Kidney (tissue), 22 donors: ENCODE measurements at regions of chr11 and their contacts with region 1.

Region 1: GRCh38 chr11:304915-305843 is 2.4 kb upstream of the IFITM2 start:
- DNase-seq: peak in 3 of 5 donors; percentile 74 to 91 (median 88)
- H3K4me3 ChIP-seq: no peak overlapping the region
- H3K27ac ChIP-seq: no peak overlapping the region
- H3K4me1 ChIP-seq: peaks cover 0 to 12% (median 0%) of the 10 kb centered on the region in 3 donors
- H3K27me3 ChIP-seq: no peaks in the 10 kb centered on the region
- CTCF ChIP-seq: peak; percentile 72

Region 2: GRCh38 chr11:355581-356458 is 50.6 kb after region 1 on chr11:
- intact Hi-C with region 1: loop called (anchors 10 kb)
- DNase-seq: peak; percentile 95 to 99 (median 97)
- H3K4me3 ChIP-seq: peak overlapping the region; percentile 4 to 42 (median 16)
- H3K27ac ChIP-seq: peak overlapping the region; percentile 97 to 100
- H3K4me1 ChIP-seq: peaks cover 6 to 21% (median 21%) of the 10 kb centered on the region in 3 donors
- H3K27me3 ChIP-seq: no peaks in the 10 kb centered on the region
- CTCF ChIP-seq: no peak